ENCODE measurements at regions of chr6 and their contacts with region 1.

Region 1: GRCh38 chr6:166627033-166627874 is at the start of gene RPS6KA2:
- DNase-seq: peak; percentile 100
- ATAC-seq: peak; percentile 92
- H3K4me3 ChIP-seq: peak within 1 kb of the TSS; percentile 78
- H3K4me3 Mint-ChIP-seq: peak within 1 kb of the TSS; percentile 91
- H3K27ac ChIP-seq: peak within 1 kb of the TSS in 1 of 2 donors; percentile 64
- H3K27ac Mint-ChIP-seq: peak within 1 kb of the TSS; percentile 92
- H3K4me1 ChIP-seq: peaks cover 24% of the 10 kb centered on the region
- H3K4me1 Mint-ChIP-seq: peaks cover 31% of the 10 kb centered on the region
- H3K27me3 ChIP-seq: peaks cover 4 to 20% of the 10 kb centered on the region in 2 experiments
- H3K27me3 Mint-ChIP-seq: peaks cover 29% of the 10 kb centered on the region
- CTCF ChIP-seq: no peak
- total RNA-seq, gene RPS6KA2: 5.6 to 6.2 TPM

Region 2: GRCh38 chr6:166419286-166419685 is 208.0 kb before region 1 on chr6:
- CTCF ChIA-PET with region 1: no interaction called
- POLR2A ChIA-PET with region 1: interaction called, 3 read pairs
- intact Hi-C with region 1: loop called in 1 of 2 experiments (anchors 10 kb)
- DNase-seq: peak in 13 of 14 experiments; percentile 42 to 85 (median 57)
- ATAC-seq: peak; percentile 23
- H3K4me3 ChIP-seq: no peak overlapping the region
- H3K4me3 Mint-ChIP-seq: peak overlapping the region; percentile 35
- H3K27ac ChIP-seq: peak overlapping the region; percentile 47 to 75
- H3K27ac Mint-ChIP-seq: peak overlapping the region; percentile 98
- H3K4me1 ChIP-seq: peaks cover 82% of the 10 kb centered on the region
- H3K4me1 Mint-ChIP-seq: peaks cover 73% of the 10 kb centered on the region
- H3K27me3 ChIP-seq: no peaks in the 10 kb centered on the region
- H3K27me3 Mint-ChIP-seq: no peaks in the 10 kb centered on the region
- CTCF ChIP-seq: no peak

Region 3: DNA sequence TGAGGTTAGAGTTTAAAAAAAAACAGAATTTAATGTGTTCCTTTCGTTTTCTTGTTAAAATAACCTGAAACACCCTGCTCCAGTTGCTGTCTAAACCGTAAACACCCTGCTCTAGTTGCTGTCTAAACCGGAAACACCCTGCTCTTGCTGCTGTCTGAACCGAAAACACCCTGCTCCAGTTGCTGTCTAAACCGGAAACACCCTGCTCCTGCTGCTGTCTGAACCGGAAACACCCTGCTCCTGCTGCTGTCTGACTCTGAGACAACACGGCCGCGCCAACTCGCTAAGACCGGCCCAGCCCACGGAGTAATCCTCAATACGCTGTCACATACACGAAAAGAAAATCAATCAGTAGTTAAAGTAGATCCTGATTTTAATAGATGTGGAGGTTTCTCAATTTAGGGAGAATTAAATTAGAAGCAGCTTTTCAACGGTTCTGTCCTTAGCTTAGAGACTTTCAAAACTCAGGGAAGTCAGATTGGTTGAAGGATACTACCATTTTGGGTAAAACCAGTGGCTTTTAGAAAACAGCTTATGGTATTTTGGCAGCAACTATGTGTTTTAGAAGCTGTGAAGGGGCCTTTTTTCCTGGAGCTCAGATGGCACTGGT is 139.1 kb before region 1 on chr6:
- CTCF ChIA-PET with region 1: interaction called, 3 read pairs
- POLR2A ChIA-PET with region 1: interaction called, 21 read pairs
- intact Hi-C with region 1: loop called (anchors 5 kb)
- DNase-seq: peak; percentile 63 to 96 (median 77)
- ATAC-seq: peak; percentile 95
- H3K4me3 ChIP-seq: peak overlapping the region; percentile 28
- H3K4me3 Mint-ChIP-seq: peak overlapping the region; percentile 55
- H3K27ac ChIP-seq: peak overlapping the region; percentile 74 to 85
- H3K27ac Mint-ChIP-seq: peak overlapping the region; percentile 95
- H3K4me1 ChIP-seq: peaks cover 36% of the 10 kb centered on the region
- H3K4me1 Mint-ChIP-seq: peaks cover 21% of the 10 kb centered on the region
- H3K27me3 ChIP-seq: no peaks in the 10 kb centered on the region
- H3K27me3 Mint-ChIP-seq: no peaks in the 10 kb centered on the region
- CTCF ChIP-seq: no peak

Region 4: GRCh38 chr6:166540631-166541331 is 86.5 kb before region 1 on chr6:
- CTCF ChIA-PET with region 1: no interaction called
- POLR2A ChIA-PET with region 1: interaction called, 10 read pairs
- intact Hi-C with region 1: no loop called
- DNase-seq: peak; percentile 9 to 88 (median 52)
- ATAC-seq: peak; percentile 92
- H3K4me3 ChIP-seq: peak overlapping the region; percentile 52
- H3K4me3 Mint-ChIP-seq: peak overlapping the region; percentile 74
- H3K27ac ChIP-seq: peak overlapping the region in 1 of 2 donors; percentile 67
- H3K27ac Mint-ChIP-seq: peak overlapping the region; percentile 62
- H3K4me1 ChIP-seq: peaks cover 35% of the 10 kb centered on the region
- H3K4me1 Mint-ChIP-seq: peaks cover 32% of the 10 kb centered on the region
- H3K27me3 ChIP-seq: no peaks in the 10 kb centered on the region
- H3K27me3 Mint-ChIP-seq: no peaks in the 10 kb centered on the region
- CTCF ChIP-seq: no peak

Region 5: DNA sequence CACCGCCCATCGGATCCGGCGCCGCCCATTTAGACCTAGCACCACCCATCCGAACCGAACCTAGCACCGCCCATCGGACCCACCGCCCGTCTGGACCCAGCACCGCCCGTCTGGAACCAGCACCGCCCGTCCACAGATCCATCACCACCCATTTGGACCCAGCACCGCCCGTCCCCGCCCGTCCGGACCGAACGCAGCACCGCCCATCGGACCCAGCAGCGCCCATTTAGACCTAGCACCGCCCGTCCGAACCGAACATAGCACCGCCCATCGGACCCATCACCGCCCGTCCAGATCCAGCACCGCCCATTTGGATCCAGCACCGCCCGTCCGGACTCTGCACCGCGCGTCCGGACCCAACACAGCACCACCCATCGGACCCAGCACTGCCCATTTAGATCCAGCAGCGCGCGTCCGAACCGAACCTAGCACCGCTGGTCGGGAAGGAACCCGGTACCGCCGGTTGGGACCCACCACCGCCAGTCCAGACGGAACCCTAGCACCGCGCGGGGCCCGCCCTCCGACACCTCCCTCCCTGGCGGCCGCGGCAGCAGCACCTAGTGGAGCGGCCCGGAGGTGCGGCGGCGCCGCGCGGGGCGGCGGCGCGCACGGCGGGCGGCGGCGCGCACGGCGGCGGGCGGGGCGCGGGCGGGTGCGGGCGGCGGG is 1199.1 kb after region 1 on chr6:
- CTCF ChIA-PET with region 1: no interaction called
- POLR2A ChIA-PET with region 1: no interaction called
- intact Hi-C with region 1: loop called in 1 of 2 experiments (anchors 10 kb)
- DNase-seq: peak; percentile 36 to 83 (median 58)
- ATAC-seq: peak; percentile 91
- H3K4me3 ChIP-seq: peak overlapping the region; percentile 80
- H3K4me3 Mint-ChIP-seq: peak overlapping the region; percentile 88
- H3K27ac ChIP-seq: no peak overlapping the region
- H3K27ac Mint-ChIP-seq: no peak overlapping the region
- H3K4me1 ChIP-seq: peaks cover 21% of the 10 kb centered on the region
- H3K4me1 Mint-ChIP-seq: peaks cover 13% of the 10 kb centered on the region
- H3K27me3 ChIP-seq: peaks cover 30 to 47% of the 10 kb centered on the region in 2 experiments
- H3K27me3 Mint-ChIP-seq: peaks cover 76% of the 10 kb centered on the region
- CTCF ChIP-seq: no peak